ENCODE measurements at regions of chr7 and their contacts with region 1.

Region 1: DNA sequence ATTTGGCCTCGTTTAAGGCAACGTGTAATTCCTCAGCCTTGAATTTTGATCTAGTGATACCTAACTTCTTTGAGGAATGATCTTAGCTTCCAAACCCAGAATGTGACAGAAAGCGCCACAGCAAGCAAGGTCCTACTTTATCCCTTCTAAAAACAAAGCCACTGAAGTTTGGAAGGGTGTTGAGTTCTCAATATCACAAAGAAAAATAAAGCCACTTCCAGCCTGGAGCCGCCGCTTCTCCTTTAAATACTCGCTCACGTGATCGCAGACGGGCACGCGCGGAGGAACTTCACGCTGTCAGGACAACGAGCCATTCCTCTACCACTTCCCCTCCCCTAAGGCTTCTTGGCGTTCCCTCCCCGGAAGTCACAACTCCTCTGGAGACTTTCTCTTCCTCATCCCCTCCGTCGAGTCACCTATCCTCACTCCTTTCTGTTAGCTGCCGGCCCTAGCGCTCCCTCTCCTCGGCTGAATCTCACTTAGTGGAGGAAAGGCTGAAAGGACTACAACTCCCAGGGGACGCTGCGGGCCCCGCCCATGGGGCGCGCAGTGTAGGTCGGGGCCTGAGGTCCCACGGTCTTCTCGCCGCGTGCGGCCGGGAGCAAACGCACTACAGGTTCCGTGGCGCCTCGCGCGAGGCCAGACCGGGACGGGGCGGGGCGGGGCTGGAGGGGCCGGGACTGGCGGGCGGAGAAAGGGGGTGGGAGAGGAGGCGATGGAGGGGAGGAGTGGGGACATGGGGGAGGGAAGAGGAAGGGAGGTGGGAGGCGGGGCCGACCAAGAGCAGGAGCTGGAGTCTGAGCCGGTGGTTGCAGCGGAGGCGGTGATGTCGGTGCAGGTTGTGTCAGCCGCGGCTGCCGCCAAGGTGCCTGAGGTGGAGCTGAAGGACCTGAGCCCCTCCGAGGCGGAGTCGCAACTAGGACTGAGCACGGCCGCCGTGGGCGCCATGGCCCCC is at the start of gene AHCYL2:
- DNase-seq: peak; percentile 94 to 100 (median 98)

Region 2: DNA sequence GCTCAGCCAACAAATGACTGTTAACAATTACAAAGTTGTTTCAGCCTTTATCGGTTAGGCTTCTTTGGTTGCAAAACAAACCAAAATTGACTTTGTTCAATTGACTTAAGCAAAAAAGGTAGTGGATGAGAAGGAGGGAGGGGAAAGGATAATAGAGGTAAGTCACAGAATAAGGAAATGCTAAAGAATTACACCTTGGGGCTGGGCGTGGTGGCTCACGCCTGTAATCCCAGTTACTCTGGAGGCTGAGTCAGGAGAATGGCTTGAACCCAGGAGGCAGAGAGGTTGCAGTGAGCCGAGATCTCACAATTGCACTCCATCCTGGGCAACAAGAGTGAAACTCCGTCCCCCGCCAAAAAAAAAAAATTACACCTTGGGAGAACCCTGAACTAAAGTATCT is 41.7 kb after region 1 on chr7:
- intact Hi-C with region 1: loop called (anchors 5 kb)
- DNase-seq: no peak